ENCODE measurements at regions of chr11 and their contacts with region 1.

Region 1: DNA sequence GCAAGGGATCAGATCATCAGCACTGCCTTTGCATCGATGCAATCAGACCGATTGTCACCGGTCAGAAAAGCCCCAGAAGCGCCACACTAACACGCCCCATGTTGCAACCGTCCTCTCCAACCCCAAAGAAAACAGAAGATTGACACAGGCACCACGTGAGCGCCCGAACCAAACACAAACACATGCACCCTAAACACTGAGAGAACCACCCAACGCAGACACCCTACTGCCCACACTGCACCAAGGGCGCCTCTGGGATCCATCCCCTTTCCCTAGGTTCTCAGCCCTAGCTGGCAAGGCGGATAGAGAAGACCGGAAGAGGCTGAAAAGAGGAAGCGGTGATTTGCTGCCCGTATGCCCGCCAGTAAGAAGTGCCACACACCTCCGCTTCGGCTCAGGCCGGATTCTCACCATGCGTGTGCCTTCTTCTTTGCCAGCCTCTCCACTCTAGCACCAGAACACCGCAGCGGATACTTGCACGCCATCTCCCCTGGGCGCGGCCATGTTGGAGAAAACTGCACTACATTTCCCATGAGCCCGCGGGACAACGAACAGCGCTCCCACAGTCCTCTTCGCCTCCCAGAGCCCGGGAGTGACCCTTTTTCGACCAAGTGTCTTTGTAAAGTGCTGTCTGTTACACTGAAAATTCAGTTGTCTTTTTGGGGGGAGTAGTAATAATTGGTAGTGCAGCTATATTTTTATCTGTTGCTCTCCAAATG is at the start of gene ALKBH8:
- DNase-seq: peak; percentile 66
- ATAC-seq: peak; percentile 88
- H3K4me3 Mint-ChIP-seq: peak within 1 kb of the TSS; percentile 96
- H3K27ac Mint-ChIP-seq: peak within 1 kb of the TSS; percentile 97
- H3K4me1 Mint-ChIP-seq: peaks cover 56% of the 10 kb centered on the region
- H3K27me3 Mint-ChIP-seq: no peaks in the 10 kb centered on the region
- CTCF ChIP-seq: no peak
- total RNA-seq, gene ALKBH8: 11.8 and 12.4 TPM in 2 replicates

Region 2: GRCh38 chr11:106683435-106683834 is 881.9 kb before region 1 on chr11:
- CTCF ChIA-PET with region 1: no interaction called
- POLR2A ChIA-PET with region 1: no interaction called
- intact Hi-C with region 1: no loop called
- DNase-seq: no peak
- ATAC-seq: no peak
- H3K4me3 Mint-ChIP-seq: no peak overlapping the region
- H3K27ac Mint-ChIP-seq: no peak overlapping the region
- H3K4me1 Mint-ChIP-seq: no peaks in the 10 kb centered on the region
- H3K27me3 Mint-ChIP-seq: no peaks in the 10 kb centered on the region
- CTCF ChIP-seq: no peak

Region 3: GRCh38 chr11:107549253-107549953 is 16.0 kb before region 1 on chr11:
- CTCF ChIA-PET with region 1: interaction called, 18 read pairs
- POLR2A ChIA-PET with region 1: no interaction called
- intact Hi-C with region 1: loop called (anchors 1 kb)
- DNase-seq: no peak
- ATAC-seq: peak; percentile 67
- H3K4me3 Mint-ChIP-seq: no peak overlapping the region
- H3K27ac Mint-ChIP-seq: no peak overlapping the region
- H3K4me1 Mint-ChIP-seq: no peaks in the 10 kb centered on the region
- H3K27me3 Mint-ChIP-seq: no peaks in the 10 kb centered on the region
- CTCF ChIP-seq: peak; percentile 67

Region 4: GRCh38 chr11:107679255-107680024 is 114.1 kb after region 1 on chr11:
- CTCF ChIA-PET with region 1: no interaction called
- POLR2A ChIA-PET with region 1: no interaction called
- intact Hi-C with region 1: no loop called
- DNase-seq: no peak
- ATAC-seq: no peak
- H3K4me3 Mint-ChIP-seq: no peak overlapping the region
- H3K27ac Mint-ChIP-seq: no peak overlapping the region
- H3K4me1 Mint-ChIP-seq: no peaks in the 10 kb centered on the region
- H3K27me3 Mint-ChIP-seq: peaks cover 3% of the 10 kb centered on the region
- CTCF ChIP-seq: no peak

Region 5: GRCh38 chr11:107689317-107690202 is 124.2 kb after region 1 on chr11:
- CTCF ChIA-PET with region 1: interaction called, 46 read pairs
- POLR2A ChIA-PET with region 1: interaction called, 4 read pairs
- intact Hi-C with region 1: loop called (anchors 1 kb)
- DNase-seq: peak; percentile 18
- ATAC-seq: peak; percentile 47
- H3K4me3 Mint-ChIP-seq: no peak overlapping the region
- H3K27ac Mint-ChIP-seq: no peak overlapping the region
- H3K4me1 Mint-ChIP-seq: peaks cover 3% of the 10 kb centered on the region
- H3K27me3 Mint-ChIP-seq: peaks cover 12% of the 10 kb centered on the region
- CTCF ChIP-seq: no peak

Region 6: DNA sequence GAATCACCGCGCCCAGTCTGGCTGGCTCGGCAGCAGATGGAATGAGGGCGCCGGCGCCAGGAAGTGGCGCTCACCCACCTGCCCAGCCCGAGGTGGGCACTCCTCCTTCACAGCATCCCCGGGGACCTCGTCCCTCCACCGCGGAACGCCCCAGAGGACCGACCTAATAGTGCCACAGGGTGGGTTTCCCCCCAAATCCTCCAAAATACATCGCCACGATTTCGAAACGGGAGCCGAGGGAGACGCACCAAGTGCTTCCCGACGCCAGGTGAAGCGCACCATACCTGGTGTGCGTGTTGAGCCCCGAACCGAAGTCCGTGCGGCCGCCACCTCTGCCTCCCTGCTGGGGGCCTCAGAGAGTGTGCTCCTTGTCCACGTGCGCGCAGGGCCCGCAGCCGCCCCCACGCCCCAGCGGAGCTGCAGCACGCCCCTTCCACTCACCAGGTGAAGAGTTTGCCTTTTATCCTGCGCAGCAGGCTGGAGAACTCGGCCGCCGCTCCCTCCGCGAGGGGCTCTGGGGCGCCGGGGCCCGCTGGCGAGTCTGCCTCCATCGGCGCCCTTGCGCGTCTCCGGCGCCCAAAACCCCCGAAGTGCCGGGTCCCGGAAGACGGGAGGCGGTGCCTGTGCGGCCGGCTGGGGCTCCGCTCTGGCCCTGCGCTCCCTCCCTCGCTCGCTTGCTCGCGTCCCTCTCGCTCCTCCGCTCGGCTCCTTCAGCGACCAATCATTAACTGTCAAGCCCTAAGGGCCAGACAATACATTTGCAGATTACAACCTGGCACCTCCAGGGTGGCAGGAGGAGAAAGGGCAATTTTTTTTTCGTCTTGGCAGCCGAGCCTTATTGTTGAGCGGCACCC is 293.1 kb after region 1 on chr11 and contains the start of gene SLC35F2:
- CTCF ChIA-PET with region 1: no interaction called
- POLR2A ChIA-PET with region 1: no interaction called
- intact Hi-C with region 1: loop called (anchors 1 kb)
- DNase-seq: peak; percentile 78
- ATAC-seq: peak; percentile 93
- H3K4me3 Mint-ChIP-seq: peak within 1 kb of the TSS; percentile 96
- H3K27ac Mint-ChIP-seq: peak within 1 kb of the TSS; percentile 90
- H3K4me1 Mint-ChIP-seq: peaks cover 30% of the 10 kb centered on the region
- H3K27me3 Mint-ChIP-seq: no peaks in the 10 kb centered on the region
- CTCF ChIP-seq: no peak
- total RNA-seq, gene SLC35F2: 20.5 and 21.9 TPM in 2 replicates

Region 7: GRCh38 chr11:108008656-108009496 is 443.5 kb after region 1 on chr11 and contains the start of gene CUL5:
- CTCF ChIA-PET with region 1: no interaction called
- POLR2A ChIA-PET with region 1: interaction called, 6 read pairs
- intact Hi-C with region 1: loop called (anchors 1 kb)
- DNase-seq: peak; percentile 89
- ATAC-seq: peak; percentile 87
- H3K4me3 Mint-ChIP-seq: peak within 1 kb of the TSS; percentile 99
- H3K27ac Mint-ChIP-seq: peak within 1 kb of the TSS; percentile 96
- H3K4me1 Mint-ChIP-seq: peaks cover 10% of the 10 kb centered on the region
- H3K27me3 Mint-ChIP-seq: no peaks in the 10 kb centered on the region
- CTCF ChIP-seq: no peak
- total RNA-seq, gene CUL5: 38.4 and 42.0 TPM in 2 replicates

Region 8: GRCh38 chr11:108467091-108467823 is 901.9 kb after region 1 on chr11 and contains the start of gene C11orf65:
- CTCF ChIA-PET with region 1: no interaction called
- POLR2A ChIA-PET with region 1: no interaction called
- intact Hi-C with region 1: loop called (anchors 2 kb)
- DNase-seq: peak; percentile 90
- ATAC-seq: peak; percentile 97
- H3K4me3 Mint-ChIP-seq: peak within 1 kb of the TSS; percentile 98
- H3K27ac Mint-ChIP-seq: peak within 1 kb of the TSS; percentile 99
- H3K4me1 Mint-ChIP-seq: peaks cover 18% of the 10 kb centered on the region
- H3K27me3 Mint-ChIP-seq: no peaks in the 10 kb centered on the region
- CTCF ChIP-seq: no peak
- total RNA-seq, gene C11orf65: 0.69 and 1.7 TPM in 2 replicates